ENCODE measurements at regions of chr3 and their contacts with region 1.

Region 1: DNA sequence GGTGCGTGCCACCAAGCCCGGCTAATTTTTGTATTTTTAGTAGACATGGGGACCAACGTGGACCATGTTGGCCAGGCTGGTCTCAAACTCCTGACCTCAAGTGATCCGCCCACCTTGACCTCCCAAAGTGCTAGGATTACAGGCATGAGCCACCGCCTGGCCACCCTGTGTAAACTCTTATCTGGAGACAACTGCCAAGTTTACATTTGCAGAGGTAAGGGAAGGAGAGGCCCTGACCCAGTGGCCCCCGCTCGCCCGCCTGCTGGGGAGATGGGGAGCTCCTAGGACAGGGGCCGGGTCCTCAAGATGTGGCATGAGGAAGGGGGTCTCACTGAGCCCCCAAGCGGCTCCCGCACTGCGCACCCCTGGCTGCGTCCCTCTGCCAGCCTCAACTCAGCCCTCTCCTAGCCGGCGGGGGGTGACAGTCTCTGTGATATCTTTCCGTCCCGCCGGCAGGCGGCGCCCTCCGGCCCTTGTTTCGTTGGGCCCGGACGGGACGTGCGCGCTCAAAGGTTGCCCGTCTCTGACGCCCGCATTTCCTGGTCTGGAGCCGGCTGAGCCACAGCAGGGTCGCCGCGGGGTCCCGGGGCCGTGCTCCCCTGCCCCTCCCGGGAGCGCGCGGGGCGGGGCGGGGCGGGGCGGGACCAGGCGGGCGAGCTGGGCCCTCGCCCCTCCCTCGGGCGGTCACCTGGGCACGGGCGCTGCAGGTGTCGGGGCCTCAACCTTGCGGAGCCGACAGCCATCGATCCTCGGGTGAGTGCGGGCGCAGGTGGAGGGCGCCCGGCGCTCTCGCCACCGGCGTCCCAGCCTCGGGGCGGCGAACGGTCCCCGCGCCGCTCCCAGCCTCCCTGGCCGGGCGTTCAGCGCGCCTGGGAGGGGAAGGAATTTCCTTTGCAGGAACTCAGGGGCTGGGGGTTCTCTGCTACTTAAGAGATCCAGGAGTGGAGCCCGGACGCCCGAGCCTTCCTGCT is at the start of gene GPR160:
- DNase-seq: peak; percentile 95
- H3K4me3 Mint-ChIP-seq: peak within 1 kb of the TSS; percentile 87
- H3K27ac Mint-ChIP-seq: no peak within 1 kb of the TSS
- H3K4me1 Mint-ChIP-seq: peaks cover 16% of the 10 kb centered on the region
- H3K27me3 Mint-ChIP-seq: peaks cover 6% of the 10 kb centered on the region
- total RNA-seq, gene GPR160: 3.4 and 3.6 TPM in 2 replicates

Region 2: GRCh38 chr3:169863458-169863899 is 174.3 kb before region 1 on chr3:
- intact Hi-C with region 1: loop called (anchors 5 kb)
- DNase-seq: peak; percentile 90
- H3K4me3 Mint-ChIP-seq: no peak overlapping the region
- H3K27ac Mint-ChIP-seq: no peak overlapping the region
- H3K4me1 Mint-ChIP-seq: peaks cover 16% of the 10 kb centered on the region
- H3K27me3 Mint-ChIP-seq: peaks cover 19% of the 10 kb centered on the region

Region 3: GRCh38 chr3:169998568-169999131 is 39.1 kb before region 1 on chr3:
- intact Hi-C with region 1: loop called (anchors 2 kb)
- DNase-seq: no peak
- H3K4me3 Mint-ChIP-seq: no peak overlapping the region
- H3K27ac Mint-ChIP-seq: peak overlapping the region; percentile 25
- H3K4me1 Mint-ChIP-seq: peaks cover 21% of the 10 kb centered on the region
- H3K27me3 Mint-ChIP-seq: no peaks in the 10 kb centered on the region

Region 4: GRCh38 chr3:170078620-170079281 is 41.0 kb after region 1 on chr3:
- intact Hi-C with region 1: loop called (anchors 5 kb)
- DNase-seq: no peak
- H3K4me3 Mint-ChIP-seq: no peak overlapping the region
- H3K27ac Mint-ChIP-seq: no peak overlapping the region
- H3K4me1 Mint-ChIP-seq: peaks cover 9% of the 10 kb centered on the region
- H3K27me3 Mint-ChIP-seq: no peaks in the 10 kb centered on the region